ENCODE measurements at regions of chr3 and their contacts with region 1.

Region 1: GRCh38 chr3:72665701-72666443 is 182.4 kb downstream of the SHQ1 start:
- DNase-seq: peak in 1 of 2 experiments; percentile 87
- H3K4me3 ChIP-seq: no peak overlapping the region
- H3K27ac ChIP-seq: no peak overlapping the region
- H3K4me1 ChIP-seq: no peaks in the 10 kb centered on the region; a peak in 1 of 7 replicates
- H3K27me3 ChIP-seq: no peaks in the 10 kb centered on the region
- CTCF ChIP-seq: peak; percentile 15 to 71 (median 70)
- EP300 ChIP-seq: no peak
- POLR2A ChIP-seq: no peak
- RAD21 ChIP-seq: peak; percentile 81 to 86

Region 2: GRCh38 chr3:72413228-72413627 is 252.6 kb before region 1 on chr3:
- CTCF ChIA-PET with region 1: no interaction called
- POLR2A ChIA-PET with region 1: no interaction called
- DNase-seq: no peak
- H3K4me3 ChIP-seq: no peak overlapping the region
- H3K27ac ChIP-seq: no peak overlapping the region
- H3K4me1 ChIP-seq: peaks cover 0 to 21% (median 4%) of the 10 kb centered on the region in 4 experiments; a peak in 3 of 7 replicates
- H3K27me3 ChIP-seq: no peaks in the 10 kb centered on the region
- CTCF ChIP-seq: no peak
- EP300 ChIP-seq: no peak
- POLR2A ChIP-seq: no peak
- RAD21 ChIP-seq: no peak

Region 3: DNA sequence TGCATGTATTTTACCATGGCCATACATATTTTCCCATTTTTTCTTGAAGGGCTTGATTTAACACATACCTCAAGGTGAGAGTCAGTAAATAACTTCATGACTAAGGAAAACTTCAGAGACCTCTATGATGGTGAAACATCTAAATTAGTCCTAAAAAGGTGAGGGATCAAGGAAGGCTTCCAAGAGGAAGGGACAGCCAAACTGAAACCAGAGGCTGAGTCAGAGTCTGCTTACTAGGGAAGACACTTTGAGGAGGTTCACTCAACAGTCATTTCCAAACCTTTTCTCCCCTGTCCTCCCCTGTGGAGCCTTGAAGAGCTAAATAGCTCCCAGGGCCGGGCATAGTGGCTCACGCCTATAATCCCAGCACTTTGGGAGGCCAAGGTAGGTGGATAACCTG is 24.2 kb before region 1 on chr3:
- CTCF ChIA-PET with region 1: interaction called, 11 read pairs
- POLR2A ChIA-PET with region 1: no interaction called
- DNase-seq: no peak
- H3K4me3 ChIP-seq: no peak overlapping the region
- H3K27ac ChIP-seq: no peak overlapping the region
- H3K4me1 ChIP-seq: no peaks in the 10 kb centered on the region
- H3K27me3 ChIP-seq: no peaks in the 10 kb centered on the region
- CTCF ChIP-seq: no peak
- EP300 ChIP-seq: no peak
- POLR2A ChIP-seq: no peak
- RAD21 ChIP-seq: no peak

Region 4: DNA sequence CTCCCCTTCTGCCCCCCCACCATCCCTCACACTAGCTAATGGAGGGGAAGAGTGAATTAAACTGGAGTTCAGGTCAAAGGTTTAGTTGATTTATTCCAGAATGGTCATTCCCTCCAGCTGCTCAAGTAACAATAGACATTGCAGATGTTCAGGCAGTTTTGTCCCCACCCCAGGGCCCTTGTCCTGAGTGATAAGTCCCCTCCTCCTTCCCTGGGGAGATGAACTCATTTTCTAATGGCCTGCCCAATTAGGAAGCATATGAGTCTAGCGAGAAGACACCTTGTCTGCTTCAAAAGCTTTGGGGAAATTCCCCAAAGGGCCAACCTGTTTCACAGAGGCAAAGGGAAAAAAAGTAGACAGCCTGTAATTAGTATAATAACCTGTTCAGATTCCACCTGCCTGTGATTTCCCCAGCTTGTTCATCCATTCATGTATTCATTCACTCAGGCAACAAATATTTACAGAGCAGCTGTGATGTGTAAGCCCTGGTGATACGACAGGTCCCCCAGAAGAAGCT is 17.1 kb after region 1 on chr3:
- CTCF ChIA-PET with region 1: interaction called, 11 read pairs
- POLR2A ChIA-PET with region 1: no interaction called
- DNase-seq: no peak
- H3K4me3 ChIP-seq: no peak overlapping the region
- H3K27ac ChIP-seq: no peak overlapping the region
- H3K4me1 ChIP-seq: no peaks in the 10 kb centered on the region
- H3K27me3 ChIP-seq: no peaks in the 10 kb centered on the region
- CTCF ChIP-seq: no peak
- EP300 ChIP-seq: no peak
- POLR2A ChIP-seq: no peak
- RAD21 ChIP-seq: no peak

Region 5: GRCh38 chr3:72698154-72698917 is 32.5 kb after region 1 on chr3:
- CTCF ChIA-PET with region 1: interaction called, 12 read pairs
- POLR2A ChIA-PET with region 1: no interaction called
- DNase-seq: peak in 1 of 2 experiments; percentile 21
- H3K4me3 ChIP-seq: no peak overlapping the region
- H3K27ac ChIP-seq: 0 out of 2 replicates have a peak overlapping the region, but pooled peaks have one; percentile 24
- H3K4me1 ChIP-seq: peaks cover 0 to 11% (median 7%) of the 10 kb centered on the region in 4 experiments; a peak in 3 of 7 replicates
- H3K27me3 ChIP-seq: no peaks in the 10 kb centered on the region; a peak in 1 of 7 replicates
- CTCF ChIP-seq: no peak
- EP300 ChIP-seq: peak in 1 of 2 experiments; percentile 70; a peak in 1 of 3 replicates
- POLR2A ChIP-seq: no peak
- RAD21 ChIP-seq: peak; percentile 7 to 12; a peak in 1 of 4 replicates

Region 6: GRCh38 chr3:72818092-72818773 is 152.4 kb after region 1 on chr3:
- CTCF ChIA-PET with region 1: interaction called, 114 read pairs
- POLR2A ChIA-PET with region 1: no interaction called
- DNase-seq: no peak
- H3K4me3 ChIP-seq: no peak overlapping the region
- H3K27ac ChIP-seq: no peak overlapping the region
- H3K4me1 ChIP-seq: peaks cover 0 to 3% (median 1%) of the 10 kb centered on the region in 4 experiments; a peak in 1 of 7 replicates
- H3K27me3 ChIP-seq: no peaks in the 10 kb centered on the region
- CTCF ChIP-seq: peak in 2 of 3 experiments; percentile 29 to 55; a peak in 2 of 4 replicates
- EP300 ChIP-seq: no peak
- POLR2A ChIP-seq: no peak
- RAD21 ChIP-seq: peak; percentile 74 to 82